Heart left ventricle (tissue), 16 donors: ENCODE measurements at regions of chr4 and their contacts with region 1.

Region 1: DNA sequence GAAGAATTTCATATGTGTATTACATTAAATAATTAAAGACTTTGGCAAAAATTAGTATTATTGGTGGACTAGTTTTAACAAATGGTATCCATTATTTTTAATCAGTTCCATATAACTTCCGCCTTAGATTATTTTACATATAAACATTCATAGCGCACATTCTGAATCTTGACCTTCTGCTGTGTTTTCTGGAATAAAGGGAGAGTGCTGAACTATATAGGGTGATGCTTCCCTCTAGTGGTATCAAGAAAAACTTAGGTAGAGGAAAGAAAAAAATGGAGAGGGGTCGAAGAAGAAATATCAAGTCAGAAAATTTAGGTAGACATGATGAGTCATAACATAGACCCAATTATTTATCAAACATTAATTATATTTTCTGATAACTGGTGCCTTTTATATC is 155.6 kb upstream of the PACRGL start:
- DNase-seq: no peak
- ATAC-seq: peak in 1 of 4 donors; percentile 50
- H3K4me3 ChIP-seq: no peak overlapping the region
- H3K27ac ChIP-seq: no peak overlapping the region
- H3K4me1 ChIP-seq: no peaks in the 10 kb centered on the region
- H3K27me3 ChIP-seq: no peaks in the 10 kb centered on the region
- CTCF ChIP-seq: peak; percentile 19 to 61 (median 43)
- POLR2A ChIP-seq: no peak

Region 2: GRCh38 chr4:18689308-18690115 is 1855.1 kb before region 1 on chr4:
- intact Hi-C with region 1: loop called in 1 of 10 experiments (anchors 10 kb)
- DNase-seq: peak in 2 of 5 donors; percentile 16 to 26
- ATAC-seq: peak in 1 of 4 donors; percentile 54
- H3K4me3 ChIP-seq: no peak overlapping the region
- H3K27ac ChIP-seq: no peak overlapping the region
- H3K4me1 ChIP-seq: peaks cover 0 to 10% (median 0%) of the 10 kb centered on the region in 12 donors
- H3K27me3 ChIP-seq: no peaks in the 10 kb centered on the region
- CTCF ChIP-seq: peak; percentile 75 to 89 (median 84)
- POLR2A ChIP-seq: no peak

Region 3: DNA sequence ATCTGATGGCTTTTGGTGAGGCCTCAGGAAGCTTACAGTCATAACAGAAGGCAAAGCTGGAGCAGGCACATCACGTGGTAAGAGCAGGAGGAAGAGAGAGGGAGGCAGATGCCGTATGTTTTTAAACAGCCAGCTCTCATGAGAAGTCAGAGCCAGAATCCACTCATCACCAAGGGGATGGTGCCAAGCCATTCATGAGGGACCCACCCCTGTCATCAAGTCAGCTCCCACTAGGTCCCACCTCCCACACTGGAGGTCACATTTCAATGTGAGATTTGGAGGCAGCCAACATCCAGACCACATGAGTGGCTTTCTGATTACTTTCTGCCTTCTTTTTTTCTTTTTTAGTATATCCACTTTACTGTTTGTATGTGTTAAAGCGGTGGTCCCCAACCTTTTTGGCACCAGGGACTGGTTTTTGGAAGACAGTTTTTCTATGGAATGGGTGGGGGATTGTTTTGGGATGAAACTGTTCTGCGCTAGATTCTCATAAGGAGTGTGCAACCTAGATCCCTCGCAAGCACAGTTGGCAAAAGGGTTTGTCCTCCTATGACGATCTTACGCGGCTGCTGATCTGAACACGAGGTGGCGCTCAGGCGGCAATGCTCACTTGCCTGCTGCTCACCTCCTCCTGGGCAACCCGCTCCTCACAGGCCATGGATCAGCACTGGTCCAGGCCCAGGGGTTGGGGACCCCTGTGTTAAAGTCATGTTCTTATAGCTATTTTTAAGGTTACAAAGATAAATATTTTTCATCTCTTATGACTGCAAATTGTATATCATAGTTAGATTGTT is 231.2 kb before region 1 on chr4:
- intact Hi-C with region 1: loop called in 1 of 10 experiments (anchors 10 kb)
- DNase-seq: no peak
- ATAC-seq: no peak
- H3K4me3 ChIP-seq: no peak overlapping the region
- H3K27ac ChIP-seq: no peak overlapping the region
- H3K4me1 ChIP-seq: no peaks in the 10 kb centered on the region
- H3K27me3 ChIP-seq: no peaks in the 10 kb centered on the region
- CTCF ChIP-seq: peak in 3 of 12 donors; percentile 15 to 16 (median 15)
- POLR2A ChIP-seq: no peak

Region 4: GRCh38 chr4:20326977-20327376 is 217.7 kb before region 1 on chr4:
- intact Hi-C with region 1: no loop called
- DNase-seq: no peak
- ATAC-seq: no peak
- H3K4me3 ChIP-seq: no peak overlapping the region
- H3K27ac ChIP-seq: no peak overlapping the region
- H3K4me1 ChIP-seq: peaks cover 0 to 4% (median 0%) of the 10 kb centered on the region in 12 donors
- H3K27me3 ChIP-seq: no peaks in the 10 kb centered on the region
- CTCF ChIP-seq: no peak
- POLR2A ChIP-seq: no peak

Region 5: DNA sequence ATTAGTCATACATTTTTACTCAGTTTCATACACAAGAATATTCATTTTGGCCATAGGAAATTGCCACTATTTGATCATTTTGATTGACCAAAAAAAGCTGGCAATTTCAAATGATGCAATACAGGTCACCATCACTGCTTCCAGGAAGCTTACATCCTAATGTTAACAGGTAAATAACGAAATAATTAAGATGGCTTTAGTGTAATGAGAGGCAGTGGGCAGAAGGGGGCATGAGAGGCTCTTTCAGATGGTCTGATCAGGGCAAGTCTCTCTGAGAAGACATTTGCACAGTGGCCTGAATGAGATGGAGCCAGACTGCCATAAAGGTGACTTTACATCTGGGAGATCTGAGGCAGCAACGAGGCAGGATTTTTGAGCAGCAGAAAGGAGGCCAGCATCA is 122.2 kb before region 1 on chr4:
- intact Hi-C with region 1: loop called in 7 of 10 experiments (anchors 5 to 10 kb)
- DNase-seq: peak in 2 of 5 donors; percentile 22 to 23
- ATAC-seq: peak in 2 of 4 donors; percentile 64 to 74
- H3K4me3 ChIP-seq: no peak overlapping the region
- H3K27ac ChIP-seq: no peak overlapping the region
- H3K4me1 ChIP-seq: peaks cover 0 to 6% (median 0%) of the 10 kb centered on the region in 12 donors
- H3K27me3 ChIP-seq: no peaks in the 10 kb centered on the region
- CTCF ChIP-seq: peak; percentile 15 to 57 (median 35)
- POLR2A ChIP-seq: no peak

Region 6: DNA sequence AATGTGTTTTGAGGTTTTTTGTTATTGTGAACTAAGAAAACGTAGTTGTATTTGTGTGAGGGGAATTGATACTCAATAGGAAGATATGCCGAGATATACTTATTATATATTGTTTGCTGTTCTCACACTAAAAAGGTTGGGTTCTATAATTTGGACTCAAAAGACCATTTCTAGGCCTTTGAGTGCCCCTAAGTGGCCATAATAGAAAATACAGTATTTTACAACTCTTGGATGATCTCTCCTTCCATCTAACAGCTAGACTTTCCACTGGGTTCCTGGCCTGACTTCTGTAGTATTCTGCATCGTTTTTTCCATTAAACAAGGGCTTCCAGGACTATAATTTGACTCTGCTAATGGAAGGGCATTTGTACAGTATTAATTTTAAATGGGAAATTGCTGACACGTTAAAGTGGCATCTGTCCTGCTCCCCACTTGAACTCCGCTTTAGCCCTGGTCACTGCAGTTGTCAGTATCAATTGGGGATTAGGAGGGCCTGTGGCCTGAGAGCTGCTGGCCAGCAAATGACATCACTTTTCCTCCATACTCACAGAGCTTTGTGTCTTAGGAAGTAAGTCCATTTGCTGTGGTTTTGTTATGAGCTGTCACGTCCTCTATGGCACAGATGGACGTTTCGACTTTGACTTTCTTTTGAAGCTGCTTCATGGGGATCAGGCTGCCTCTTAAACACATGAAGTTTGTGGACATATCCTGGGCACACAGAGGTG is 116.0 kb before region 1 on chr4:
- intact Hi-C with region 1: loop called in 8 of 10 experiments (anchors 5 to 10 kb)
- DNase-seq: no peak
- ATAC-seq: peak in 1 of 4 donors; percentile 23
- H3K4me3 ChIP-seq: no peak overlapping the region
- H3K27ac ChIP-seq: no peak overlapping the region
- H3K4me1 ChIP-seq: peaks cover 0 to 4% (median 0%) of the 10 kb centered on the region in 12 donors
- H3K27me3 ChIP-seq: no peaks in the 10 kb centered on the region
- CTCF ChIP-seq: peak in 6 of 12 donors; percentile 11 to 40 (median 28)
- POLR2A ChIP-seq: no peak